Right lobe of liver (tissue), 6 donors: ENCODE measurements at regions of chr1 and their contacts with region 1.

Region 1: DNA sequence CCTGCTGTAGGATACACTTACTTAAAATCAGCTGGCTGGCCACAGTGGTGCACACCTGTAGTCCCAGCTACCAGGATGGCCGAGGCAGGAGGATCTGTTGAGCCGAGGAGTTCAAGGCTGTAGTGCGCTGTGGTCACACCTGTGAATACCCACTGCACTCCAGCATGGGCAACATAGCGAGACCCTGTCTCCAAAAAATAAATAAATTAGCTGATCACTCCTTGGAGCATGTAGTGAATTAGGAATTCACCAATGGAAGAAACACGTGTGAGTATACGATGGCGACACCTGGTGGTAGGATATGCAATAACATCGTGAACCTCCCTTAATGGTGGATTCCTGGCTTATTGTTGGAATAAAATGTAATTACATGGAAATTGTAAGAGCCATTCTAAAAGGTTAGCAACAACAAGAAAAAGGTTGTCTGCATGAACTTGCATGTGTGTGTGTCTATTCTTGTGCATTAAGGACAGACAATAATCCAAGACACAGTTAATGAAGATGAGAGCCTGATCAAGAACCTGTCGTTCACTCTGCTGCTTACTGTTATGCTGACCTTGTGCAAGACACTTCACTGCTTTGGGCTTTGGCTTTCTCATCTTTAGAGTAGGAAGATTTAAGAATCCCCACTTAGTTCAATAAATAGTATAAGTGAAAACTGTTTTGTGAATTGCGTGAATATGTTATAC is 38.6 kb upstream of the COX20 start:
- DNase-seq: peak in 1 of 3 donors; percentile 70
- ATAC-seq: peak; percentile 74 to 85 (median 81)
- H3K4me3 ChIP-seq: no peak overlapping the region
- H3K27ac ChIP-seq: no peak overlapping the region
- H3K4me1 ChIP-seq: peaks cover 0 to 5% (median 2%) of the 10 kb centered on the region in 4 donors
- H3K27me3 ChIP-seq: no peaks in the 10 kb centered on the region
- CTCF ChIP-seq: peak; percentile 83 to 91 (median 88)
- POLR2A ChIP-seq: no peak

Region 2: GRCh38 chr1:244599937-244600350 is 196.9 kb before region 1 on chr1:
- intact Hi-C with region 1: loop called (anchors 5 kb)
- DNase-seq: no peak
- ATAC-seq: peak in 3 of 4 donors; percentile 36 to 86 (median 61)
- H3K4me3 ChIP-seq: no peak overlapping the region
- H3K27ac ChIP-seq: no peak overlapping the region
- H3K4me1 ChIP-seq: no peaks in the 10 kb centered on the region
- H3K27me3 ChIP-seq: no peaks in the 10 kb centered on the region
- CTCF ChIP-seq: no peak
- POLR2A ChIP-seq: no peak

Region 3: GRCh38 chr1:244605835-244606370 is 191.0 kb before region 1 on chr1:
- intact Hi-C with region 1: loop called (anchors 5 kb)
- DNase-seq: no peak
- ATAC-seq: no peak
- H3K4me3 ChIP-seq: no peak overlapping the region
- H3K27ac ChIP-seq: no peak overlapping the region
- H3K4me1 ChIP-seq: no peaks in the 10 kb centered on the region
- H3K27me3 ChIP-seq: no peaks in the 10 kb centered on the region
- CTCF ChIP-seq: no peak
- POLR2A ChIP-seq: no peak

Region 4: GRCh38 chr1:244952940-244953339 is 156.1 kb after region 1 on chr1:
- intact Hi-C with region 1: no loop called
- DNase-seq: no peak
- ATAC-seq: no peak
- H3K4me3 ChIP-seq: no peak overlapping the region
- H3K27ac ChIP-seq: no peak overlapping the region
- H3K4me1 ChIP-seq: no peaks in the 10 kb centered on the region
- H3K27me3 ChIP-seq: no peaks in the 10 kb centered on the region
- CTCF ChIP-seq: no peak
- POLR2A ChIP-seq: no peak

Region 5: DNA sequence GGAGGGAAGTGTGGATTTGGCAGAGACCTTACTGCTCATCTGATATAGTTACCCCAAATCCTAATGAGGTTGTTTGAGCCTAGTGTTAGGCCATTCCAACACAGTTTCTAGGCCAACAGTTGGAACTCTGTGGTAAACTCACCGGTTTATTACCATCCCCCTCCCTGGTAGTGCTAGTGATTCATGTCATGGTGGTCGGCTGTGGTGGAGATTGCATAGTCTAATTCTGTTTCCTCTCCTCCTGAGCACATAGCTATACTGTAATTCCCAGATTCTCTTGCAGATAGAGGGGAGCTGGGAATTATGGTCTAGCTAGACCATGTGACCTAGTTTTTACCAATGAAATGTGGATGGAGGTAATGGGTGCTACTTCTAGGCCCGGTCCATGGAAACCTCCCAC is 234.2 kb after region 1 on chr1:
- intact Hi-C with region 1: loop called in 1 of 2 experiments (anchors 10 kb)
- DNase-seq: no peak
- ATAC-seq: no peak
- H3K4me3 ChIP-seq: no peak overlapping the region
- H3K27ac ChIP-seq: no peak overlapping the region
- H3K4me1 ChIP-seq: no peaks in the 10 kb centered on the region
- H3K27me3 ChIP-seq: no peaks in the 10 kb centered on the region
- CTCF ChIP-seq: no peak
- POLR2A ChIP-seq: no peak

Region 6: GRCh38 chr1:245045087-245045881 is 248.4 kb after region 1 on chr1:
- intact Hi-C with region 1: loop called in 1 of 2 experiments (anchors 10 kb)
- DNase-seq: peak; percentile 73 to 91 (median 88)
- ATAC-seq: peak; percentile 87 to 94 (median 90)
- H3K4me3 ChIP-seq: peak overlapping the region in 2 of 3 donors; percentile 7 to 36
- H3K27ac ChIP-seq: peak overlapping the region in 2 of 3 donors; percentile 65 to 66
- H3K4me1 ChIP-seq: peaks cover 0 to 40% (median 3%) of the 10 kb centered on the region in 4 donors
- H3K27me3 ChIP-seq: no peaks in the 10 kb centered on the region
- CTCF ChIP-seq: no peak
- POLR2A ChIP-seq: peak; percentile 40

Region 7: GRCh38 chr1:245234217-245235081 is 437.6 kb after region 1 on chr1:
- intact Hi-C with region 1: no loop called
- DNase-seq: no peak
- ATAC-seq: peak in 2 of 4 donors; percentile 28 to 48
- H3K4me3 ChIP-seq: no peak overlapping the region
- H3K27ac ChIP-seq: no peak overlapping the region
- H3K4me1 ChIP-seq: no peaks in the 10 kb centered on the region
- H3K27me3 ChIP-seq: no peaks in the 10 kb centered on the region
- CTCF ChIP-seq: no peak
- POLR2A ChIP-seq: no peak